Cardiac septum (tissue), 1 donor: ENCODE measurements at regions of chr1 and their contacts with region 1.

Region 1: DNA sequence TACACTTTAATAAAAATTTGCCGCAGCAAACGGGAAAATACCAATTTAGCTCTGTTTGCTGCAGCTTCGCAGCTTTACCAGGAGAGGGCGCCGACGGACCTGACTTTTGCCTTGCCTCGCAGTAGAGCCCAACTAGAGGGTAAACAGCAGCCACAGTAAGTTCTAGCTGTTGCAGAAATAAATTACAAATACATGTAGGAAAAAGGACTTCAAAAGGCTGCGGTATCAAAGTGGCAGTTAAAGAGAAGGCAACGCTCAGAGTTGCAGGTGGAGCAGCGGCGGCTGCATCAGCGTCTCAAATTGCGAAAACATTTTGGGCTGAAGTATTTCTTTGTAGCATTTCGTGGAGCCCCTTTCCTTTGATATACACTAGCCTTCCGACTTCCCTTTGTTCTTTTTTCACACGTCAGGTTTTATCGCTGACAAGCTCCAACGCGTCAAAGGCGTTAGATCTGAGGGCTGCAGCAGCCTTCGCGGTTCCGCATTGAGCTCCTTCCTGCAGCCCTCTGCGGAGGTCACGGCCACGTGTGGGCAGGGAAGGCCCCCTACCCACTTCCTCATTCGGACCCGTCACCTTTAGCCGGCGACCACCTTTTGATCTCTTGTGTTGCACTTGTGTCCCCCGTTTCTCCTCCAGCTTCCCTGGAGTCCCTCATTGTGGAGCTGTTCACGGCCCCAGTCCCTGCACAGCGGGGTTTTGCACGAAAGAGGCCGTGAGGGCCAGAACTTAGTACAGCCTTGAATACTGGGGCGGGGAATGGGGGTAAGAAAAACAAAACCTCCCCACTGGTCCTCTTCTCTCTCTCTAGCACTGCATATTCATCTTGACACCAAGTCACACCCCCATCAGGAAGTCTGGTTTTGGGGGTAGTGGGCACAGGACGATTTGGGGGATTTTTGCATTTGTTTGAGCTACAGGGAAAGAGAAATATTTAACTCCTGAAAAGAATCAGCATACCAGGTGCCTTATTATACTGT is 72.8 kb downstream of the S1PR1 start:
- DNase-seq: peak; percentile 82

Region 2: DNA sequence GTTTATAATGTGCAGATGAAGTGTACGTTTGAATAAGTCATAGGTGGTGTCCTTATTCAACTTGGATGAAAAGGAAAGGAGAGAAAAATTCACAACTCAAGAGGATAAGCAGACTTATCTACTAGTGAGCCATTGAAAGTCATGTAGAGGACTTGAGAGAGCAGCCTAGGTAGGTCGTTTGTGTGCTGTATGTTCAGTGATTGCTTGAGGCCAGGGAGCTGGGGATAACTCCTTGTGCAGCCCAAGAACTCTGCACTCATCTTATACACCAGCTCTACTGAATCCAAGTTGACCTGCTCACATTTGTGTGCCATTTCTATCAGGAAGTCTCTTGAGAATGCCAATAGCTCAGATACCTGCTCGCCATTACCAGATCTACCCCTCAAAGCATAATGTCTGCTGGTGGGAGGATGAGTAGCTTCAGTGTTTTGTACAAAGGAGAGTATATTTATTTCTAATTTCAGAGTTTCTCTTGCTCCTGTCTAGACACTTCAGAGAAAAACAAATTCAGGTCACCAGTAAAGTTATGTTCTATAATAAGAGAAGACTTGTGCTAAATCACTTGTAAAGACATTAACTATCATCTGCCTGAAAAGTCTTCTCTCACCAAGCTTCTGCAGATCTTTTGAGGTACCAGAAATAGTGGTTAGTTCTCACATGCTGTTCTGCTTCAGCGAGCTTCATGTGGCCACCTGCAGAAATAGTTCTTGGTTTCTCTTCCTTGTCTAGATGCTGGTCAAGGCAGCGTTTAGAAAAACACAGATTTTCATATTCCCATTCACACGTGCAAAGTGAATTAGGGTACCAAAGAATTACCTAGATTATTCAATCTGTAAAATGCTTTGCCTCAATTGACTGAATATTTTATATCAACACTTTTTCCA is 62.0 kb before region 1 on chr1:
- intact Hi-C with region 1: no loop called
- DNase-seq: no peak

Region 3: GRCh38 chr1:101325144-101325543 is 15.5 kb after region 1 on chr1:
- intact Hi-C with region 1: no loop called
- DNase-seq: no peak

Region 4: GRCh38 chr1:101357444-101357986 is 47.9 kb after region 1 on chr1:
- intact Hi-C with region 1: loop called (anchors 5 kb)
- DNase-seq: no peak

Region 5: DNA sequence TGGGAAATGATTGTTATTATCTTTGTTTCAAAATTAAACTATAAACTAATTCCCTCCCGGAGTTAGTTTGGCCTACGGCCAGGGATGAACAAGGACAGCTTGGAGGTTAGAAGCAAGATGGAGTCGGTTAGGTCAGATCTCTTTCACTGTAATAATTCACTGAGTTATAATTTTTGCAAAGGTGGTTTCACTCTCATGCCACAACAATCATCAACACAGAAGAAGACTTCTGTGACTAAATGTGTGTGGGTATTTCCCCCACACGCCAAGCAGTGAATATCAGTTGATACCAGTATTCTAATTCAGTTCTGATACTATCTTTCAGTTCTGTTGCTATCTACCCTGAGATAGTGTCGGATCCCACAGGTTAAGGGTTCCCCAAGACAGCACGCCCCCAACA is 142.3 kb after region 1 on chr1:
- intact Hi-C with region 1: no loop called
- DNase-seq: no peak

Region 6: DNA sequence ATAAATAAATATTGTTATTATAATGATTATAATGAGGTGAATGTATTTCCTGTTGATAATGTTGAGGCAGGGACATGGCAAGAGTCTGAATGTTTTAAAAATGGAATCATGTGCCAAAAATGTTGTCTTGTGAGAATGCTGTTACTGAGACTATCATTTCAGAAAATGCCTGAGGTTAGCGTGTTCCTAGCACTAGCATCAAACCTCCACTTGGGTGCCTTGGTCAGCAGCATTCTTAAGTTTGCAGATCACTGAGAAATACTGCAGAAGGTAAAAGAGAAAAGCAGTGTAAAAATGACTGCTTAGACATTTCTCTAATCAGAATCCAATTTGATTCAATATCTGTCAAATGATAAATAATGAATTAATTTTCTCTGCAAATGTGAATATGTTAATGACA is 636.3 kb after region 1 on chr1:
- intact Hi-C with region 1: no loop called
- DNase-seq: no peak